Posterior cingulate gyrus (tissue), 11 donors: ENCODE measurements at regions of chr1 and their contacts with region 1.

Region 1: DNA sequence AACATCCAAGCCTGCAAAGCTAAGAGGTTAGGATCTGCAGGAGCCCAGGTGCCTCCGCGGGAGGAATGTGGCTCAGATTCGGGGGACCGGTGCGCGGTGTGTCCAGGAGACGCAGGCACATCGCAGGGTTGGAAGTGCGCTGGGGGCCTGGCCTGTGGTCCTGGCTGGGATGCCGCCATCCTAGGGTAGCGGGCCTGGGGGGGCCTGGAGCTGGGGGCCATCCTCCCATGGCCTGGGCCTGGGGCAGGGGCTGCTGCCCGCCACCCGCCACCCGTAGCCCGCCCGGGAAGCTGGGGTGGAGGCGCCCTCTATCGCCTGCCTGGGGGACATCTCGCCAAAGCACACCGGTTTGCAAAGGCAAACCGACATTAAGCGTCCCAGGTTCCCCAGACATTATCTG is 170.6 kb upstream of the ARHGEF16 start:
- DNase-seq: peak; percentile 40 to 93 (median 68)

Region 2: GRCh38 chr1:3012456-3013291 is 271.2 kb before region 1 on chr1:
- intact Hi-C with region 1: loop called (anchors 1 kb)
- DNase-seq: peak; percentile 59 to 96 (median 84)

Region 3: DNA sequence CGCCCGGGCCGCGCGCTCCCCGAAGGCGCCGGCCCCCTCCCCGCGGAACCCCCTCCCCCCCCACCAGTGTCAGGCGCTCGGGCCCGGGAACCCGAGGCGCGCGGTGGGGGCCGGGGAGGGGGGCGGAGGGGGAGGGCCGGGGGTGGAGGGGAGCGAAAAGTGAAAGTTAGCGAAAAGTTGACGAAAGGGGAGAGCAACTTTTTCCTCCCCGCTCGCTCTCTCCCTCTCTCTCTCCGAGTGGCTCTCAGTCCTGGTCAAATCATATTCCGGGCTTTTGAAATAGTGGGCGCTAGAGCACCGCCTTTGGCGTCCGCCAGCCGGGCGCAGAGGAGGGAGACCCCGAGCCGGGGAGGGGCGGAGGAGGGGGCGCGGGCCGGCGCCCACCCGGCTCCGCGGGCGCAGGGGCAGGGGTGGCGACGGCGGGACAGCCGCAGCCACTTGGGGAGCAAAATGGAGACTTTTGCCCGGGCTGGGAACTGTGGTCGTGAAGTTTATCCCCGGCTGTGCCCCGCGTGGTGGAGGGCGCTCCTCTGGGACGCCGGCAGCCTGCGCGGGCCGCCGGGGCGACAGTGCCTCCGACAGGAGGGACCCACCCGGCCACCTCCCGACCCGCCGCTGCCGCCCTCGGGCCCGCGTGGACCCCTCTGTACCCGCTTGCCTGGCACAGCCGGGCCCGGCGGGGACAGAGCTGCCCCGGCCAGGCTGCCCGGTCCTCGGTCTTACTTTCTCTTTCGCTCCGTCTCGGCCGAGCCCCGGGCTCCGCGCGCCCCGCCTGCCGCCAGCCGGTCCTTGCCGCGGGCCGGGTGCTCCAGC is 214.2 kb before region 1 on chr1:
- intact Hi-C with region 1: loop called (anchors 2 kb)
- DNase-seq: peak in 7 of 10 donors; percentile 22 to 82 (median 41)